ENCODE measurements at regions of chr22 and their contacts with region 1.

Region 1: DNA sequence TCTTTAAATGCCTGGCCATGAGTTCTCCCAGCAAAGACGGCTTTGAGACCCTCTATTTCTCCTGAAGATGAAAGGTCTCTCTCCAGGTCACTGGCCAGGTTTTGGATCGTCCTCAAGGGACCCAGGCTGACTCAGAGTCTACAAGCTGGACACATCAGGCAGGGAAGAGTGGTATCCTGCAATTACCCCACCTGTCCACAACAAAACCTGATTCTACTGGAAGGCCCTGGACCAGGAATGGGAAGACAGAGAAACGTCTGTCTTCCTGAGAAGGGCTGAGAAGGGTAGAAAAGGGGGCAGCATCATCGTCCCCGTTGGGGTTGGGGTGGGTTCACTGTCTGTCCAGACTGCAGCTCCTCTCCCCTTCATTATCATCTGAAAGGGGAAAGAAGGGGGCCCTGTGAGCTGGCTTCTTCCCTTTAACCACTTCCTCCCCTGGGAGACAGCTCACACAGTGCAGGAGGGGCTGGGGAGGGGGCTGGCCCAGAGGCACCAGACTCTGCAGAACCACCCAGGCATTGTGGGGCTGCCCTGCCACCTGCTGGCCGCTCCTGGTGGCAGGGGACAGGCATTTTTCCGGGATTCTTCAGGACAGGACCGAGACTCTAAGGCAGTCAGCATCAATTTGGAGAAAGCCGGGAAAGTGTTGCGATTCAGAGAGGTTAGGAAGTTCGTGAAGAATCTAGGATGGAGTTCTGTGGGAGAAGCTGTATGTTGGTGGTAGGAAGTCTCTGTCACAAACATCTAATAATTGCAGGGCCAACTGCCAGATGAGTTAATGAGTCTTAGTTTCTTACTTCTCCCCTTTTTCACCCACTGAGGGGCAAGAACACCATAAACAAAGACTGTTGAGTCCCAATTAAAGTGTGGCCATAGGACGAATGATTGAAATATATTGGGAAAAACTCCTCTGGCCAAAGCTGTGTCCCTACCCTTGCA is 57.6 kb downstream of the SYN3 start:
- DNase-seq: peak; percentile 65
- H3K4me3 Mint-ChIP-seq: no peak overlapping the region
- H3K27ac Mint-ChIP-seq: peak overlapping the region; percentile 99
- H3K4me1 Mint-ChIP-seq: peaks cover 53% of the 10 kb centered on the region
- H3K27me3 Mint-ChIP-seq: no peaks in the 10 kb centered on the region
- CTCF ChIP-seq: peak; percentile 90

Region 2: DNA sequence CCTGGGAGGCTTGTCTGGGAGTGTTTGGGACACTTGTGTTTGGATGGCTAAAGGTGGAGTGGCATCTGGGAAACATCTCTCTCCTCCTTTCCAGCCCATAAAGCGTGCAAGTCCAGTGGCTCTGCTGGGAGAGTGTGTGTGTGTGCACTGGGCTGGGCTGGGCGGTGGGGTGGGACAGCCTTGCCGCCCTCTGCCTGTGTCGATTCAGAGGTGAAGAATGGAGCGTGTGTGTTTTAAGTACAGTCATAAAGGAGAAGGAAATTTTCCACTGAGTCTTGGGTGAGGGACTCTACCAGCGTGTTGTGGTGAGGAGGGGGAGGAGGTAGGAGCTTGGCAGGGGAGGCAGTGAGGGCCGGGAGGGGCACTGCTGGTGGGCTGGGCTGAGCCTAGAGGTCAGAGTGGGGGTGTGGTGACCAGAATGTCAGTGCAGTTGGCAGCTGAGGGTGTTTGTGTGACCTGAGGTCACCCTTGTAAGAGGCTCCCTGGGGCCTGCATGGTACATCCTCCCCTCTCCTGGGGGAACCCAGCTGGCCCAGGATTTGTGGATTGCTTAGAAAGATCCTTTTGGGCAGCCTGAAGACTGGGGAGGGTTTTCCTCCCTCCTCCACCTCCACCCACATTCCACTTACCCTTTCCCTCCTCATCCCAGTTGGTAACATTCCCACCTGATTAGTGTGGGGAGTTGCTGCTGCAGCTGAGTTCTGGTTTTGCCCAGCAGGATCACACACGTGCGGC is 197.4 kb before region 1 on chr22:
- CTCF ChIA-PET with region 1: interaction called, 31 read pairs
- POLR2A ChIA-PET with region 1: interaction called, 6 read pairs
- intact Hi-C with region 1: loop called (anchors 1 kb)
- DNase-seq: peak; percentile 33
- H3K4me3 Mint-ChIP-seq: peak overlapping the region; percentile 80
- H3K27ac Mint-ChIP-seq: peak overlapping the region; percentile 63
- H3K4me1 Mint-ChIP-seq: peaks cover 25% of the 10 kb centered on the region
- H3K27me3 Mint-ChIP-seq: no peaks in the 10 kb centered on the region
- CTCF ChIP-seq: no peak

Measured in MCF 10A (cell line).